PC-3 (cell line): ENCODE measurements at regions of chr15 and their contacts with region 1.

Region 1: DNA sequence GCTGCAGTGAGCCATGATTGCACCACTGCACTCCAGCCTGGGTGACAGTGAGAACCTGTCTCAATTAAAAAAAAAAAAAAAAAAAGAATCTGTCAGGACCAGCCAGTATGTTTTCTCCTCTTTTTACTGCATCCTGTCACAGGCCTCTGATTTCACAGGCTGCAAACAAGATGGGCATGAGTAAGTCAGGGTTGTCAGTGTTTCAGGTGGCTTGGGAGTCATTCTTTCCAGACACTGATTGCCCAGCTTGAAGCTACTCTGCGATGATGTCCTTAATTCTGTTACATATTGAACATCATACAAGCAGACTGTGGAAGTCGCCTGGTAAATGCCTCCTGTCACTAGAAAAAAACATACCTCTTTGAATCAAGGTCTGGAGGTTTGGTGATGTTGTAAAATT is 18.8 kb downstream of the DIS3L start:
- DNase-seq: no peak
- ATAC-seq: no peak
- H3K4me3 ChIP-seq: no peak overlapping the region
- H3K27ac ChIP-seq: no peak overlapping the region
- H3K4me1 ChIP-seq: no peaks in the 10 kb centered on the region
- H3K27me3 ChIP-seq: no peaks in the 10 kb centered on the region
- CTCF ChIP-seq: no peak

Region 2: GRCh38 chr15:66046751-66047150 is 265.4 kb before region 1 on chr15:
- CTCF ChIA-PET with region 1: interaction called, 13 read pairs
- POLR2A ChIA-PET with region 1: no interaction called
- intact Hi-C with region 1: no loop called
- DNase-seq: no peak
- ATAC-seq: no peak; the same call in 1 of the 2 replicates
- H3K4me3 ChIP-seq: no peak overlapping the region
- H3K27ac ChIP-seq: no peak overlapping the region
- H3K4me1 ChIP-seq: no peaks in the 10 kb centered on the region
- H3K27me3 ChIP-seq: no peaks in the 10 kb centered on the region
- CTCF ChIP-seq: peak; percentile 38